ENCODE measurements at regions of chr11 and their contacts with region 1.

Region 1: GRCh38 chr11:73760679-73761402 is at the start of gene RAB6A:
- DNase-seq: peak; percentile 100
- H3K4me3 ChIP-seq: peak within 1 kb of the TSS; percentile 72 to 93 (median 82)
- H3K4me3 Mint-ChIP-seq: peak within 1 kb of the TSS; percentile 96 to 98
- H3K27ac ChIP-seq: peak within 1 kb of the TSS; percentile 85 to 89
- H3K27ac Mint-ChIP-seq: peak within 1 kb of the TSS; percentile 76 to 92 (median 89)
- H3K4me1 ChIP-seq: peaks cover 23 to 43% of the 10 kb centered on the region in 2 donors
- H3K4me1 Mint-ChIP-seq: peaks cover 30% of the 10 kb centered on the region
- H3K27me3 ChIP-seq: no peaks in the 10 kb centered on the region
- H3K27me3 Mint-ChIP-seq: peaks cover 0 to 7% (median 3%) of the 10 kb centered on the region in 3 donors
- CTCF ChIP-seq: no peak
- polyA plus RNA-seq, gene RAB6A: 38.3 to 91.3 (median 78.6) TPM

Region 2: GRCh38 chr11:73779084-73779902 is 18.5 kb after region 1 on chr11:
- intact Hi-C with region 1: loop called (anchors 1 kb)
- DNase-seq: peak; percentile 93 to 94 (median 94)
- H3K4me3 ChIP-seq: peak overlapping the region; percentile 66 to 93 (median 88)
- H3K4me3 Mint-ChIP-seq: peak overlapping the region; percentile 88 to 95
- H3K27ac ChIP-seq: peak overlapping the region; percentile 88 to 90
- H3K27ac Mint-ChIP-seq: peak overlapping the region; percentile 95 to 99 (median 98)
- H3K4me1 ChIP-seq: peaks cover 4 to 16% of the 10 kb centered on the region in 2 donors
- H3K4me1 Mint-ChIP-seq: peaks cover 2% of the 10 kb centered on the region
- H3K27me3 ChIP-seq: no peaks in the 10 kb centered on the region
- H3K27me3 Mint-ChIP-seq: peaks cover 2 to 4% (median 3%) of the 10 kb centered on the region in 3 donors
- CTCF ChIP-seq: no peak